Transverse colon (tissue), 4 donors: ENCODE measurements at regions of chr13 and their contacts with region 1.

Region 1: GRCh38 chr13:44075113-44075512 is 195.4 kb downstream of the LACC1 start:
- DNase-seq: no peak
- H3K4me3 ChIP-seq: no peak overlapping the region
- H3K27ac ChIP-seq: no peak overlapping the region
- H3K4me1 ChIP-seq: no peaks in the 10 kb centered on the region
- H3K27me3 ChIP-seq: no peaks in the 10 kb centered on the region
- CTCF ChIP-seq: no peak
- EP300 ChIP-seq: no peak
- POLR2A ChIP-seq: no peak

Region 2: GRCh38 chr13:45356966-45357672 is 1282.0 kb after region 1 on chr13:
- in situ Hi-C with region 1: no loop called
- intact Hi-C with region 1: loop called (anchors 5 kb)
- DNase-seq: no peak
- H3K4me3 ChIP-seq: no peak overlapping the region
- H3K27ac ChIP-seq: no peak overlapping the region
- H3K4me1 ChIP-seq: no peaks in the 10 kb centered on the region
- H3K27me3 ChIP-seq: no peaks in the 10 kb centered on the region
- CTCF ChIP-seq: no peak
- EP300 ChIP-seq: no peak
- POLR2A ChIP-seq: no peak